Cardiac septum (tissue), 1 donor: ENCODE measurements at regions of chr7 and their contacts with region 1.

Region 1: DNA sequence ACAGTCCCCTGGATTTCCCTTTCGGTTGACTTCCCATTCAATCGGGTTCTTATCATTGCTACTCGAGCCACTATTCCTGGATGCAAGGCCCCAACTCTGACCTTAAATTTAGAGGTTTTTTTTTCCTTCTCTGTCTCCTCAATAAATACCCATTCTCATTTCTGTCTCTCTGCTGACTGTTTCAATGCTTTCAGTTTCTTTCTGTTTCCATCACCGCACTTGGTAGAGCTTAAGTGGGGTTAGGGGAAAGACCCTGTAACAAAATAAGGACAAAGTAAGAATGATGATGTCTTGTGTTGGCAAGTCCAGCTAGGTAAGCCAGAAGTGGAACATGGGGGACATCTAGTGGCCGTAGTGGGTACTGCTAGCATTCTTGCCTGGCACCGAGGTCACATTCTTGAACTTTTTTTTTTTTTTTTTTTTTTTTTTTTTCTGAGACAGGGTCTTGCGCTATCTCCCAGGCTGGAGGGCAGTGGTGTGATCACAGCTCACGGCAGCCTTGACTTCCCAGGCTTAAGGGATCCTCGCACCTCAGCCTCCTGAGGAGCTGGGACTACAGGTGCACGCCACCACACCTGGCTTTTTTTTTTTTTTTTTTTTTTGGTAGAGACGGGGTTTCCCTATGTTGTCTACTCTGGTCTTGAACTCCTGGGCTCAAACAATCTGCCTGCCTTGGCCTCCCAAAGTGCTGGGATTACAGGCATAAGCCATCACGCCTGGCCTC is 40.3 kb downstream of the ZC3HC1 start:
- DNase-seq: peak; percentile 86

Region 2: DNA sequence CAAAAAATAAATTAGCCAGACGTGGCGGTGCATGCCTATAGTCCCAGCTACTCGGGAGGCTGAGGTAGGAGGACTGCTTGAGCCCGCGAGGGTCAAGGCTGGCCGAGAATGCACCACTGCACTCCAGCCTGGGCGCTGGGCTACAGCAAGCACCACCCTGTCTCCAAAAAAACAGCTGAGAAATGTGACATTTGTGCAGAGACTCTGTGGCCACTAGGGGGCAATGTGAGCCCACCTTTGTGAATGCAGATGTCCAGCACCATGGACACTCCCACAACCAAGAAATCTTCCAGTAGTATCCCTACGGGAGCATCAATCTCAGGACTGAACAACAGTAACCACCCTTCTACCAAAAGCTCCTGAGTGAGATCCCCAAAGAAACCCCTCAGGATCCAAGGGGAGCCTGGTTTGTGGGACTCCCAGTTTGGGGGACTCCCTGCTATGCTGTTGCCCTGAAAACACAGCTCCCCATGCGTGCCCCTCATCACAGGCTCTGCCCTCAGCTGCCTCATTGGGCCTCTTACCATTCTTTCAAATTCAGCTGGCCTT is 792.3 kb before region 1 on chr7:
- intact Hi-C with region 1: loop called (anchors 10 kb)
- DNase-seq: peak; percentile 81

Region 3: GRCh38 chr7:129502376-129502776 is 508.5 kb before region 1 on chr7 and contains the start of gene SMKR1:
- intact Hi-C with region 1: loop called (anchors 10 kb)
- DNase-seq: no peak
- total RNA-seq, gene SMKR1: not detected

Region 4: GRCh38 chr7:129664029-129665012 is 346.5 kb before region 1 on chr7:
- intact Hi-C with region 1: loop called (anchors 2 kb)
- DNase-seq: no peak

Region 5: DNA sequence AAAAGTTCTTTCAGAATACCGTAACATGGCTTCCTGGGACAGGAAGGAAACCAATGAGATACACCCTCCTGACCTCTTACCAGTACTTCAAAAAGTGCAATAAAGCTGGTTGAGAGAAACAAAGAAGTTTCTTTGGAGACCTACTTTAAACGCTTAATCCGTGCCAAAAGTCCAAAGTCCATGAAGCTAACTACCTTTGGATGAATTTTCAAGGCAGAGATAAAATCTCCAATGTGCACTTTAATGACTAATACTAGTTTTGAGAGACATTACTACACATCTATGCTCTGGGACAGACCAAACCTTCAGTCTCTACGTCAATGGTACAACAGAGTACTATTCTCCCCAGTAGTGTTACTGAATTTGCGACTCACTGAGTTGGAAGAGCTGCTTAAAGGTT is 104.2 kb before region 1 on chr7:
- intact Hi-C with region 1: no loop called
- DNase-seq: no peak

Region 6: GRCh38 chr7:129952653-129953560 is 57.9 kb before region 1 on chr7 and contains the start of gene UBE2H:
- intact Hi-C with region 1: loop called (anchors 5 kb)
- DNase-seq: peak; percentile 97
- total RNA-seq, gene UBE2H: 228 TPM